ENCODE measurements at regions of chr18 and their contacts with region 1.

Region 1: DNA sequence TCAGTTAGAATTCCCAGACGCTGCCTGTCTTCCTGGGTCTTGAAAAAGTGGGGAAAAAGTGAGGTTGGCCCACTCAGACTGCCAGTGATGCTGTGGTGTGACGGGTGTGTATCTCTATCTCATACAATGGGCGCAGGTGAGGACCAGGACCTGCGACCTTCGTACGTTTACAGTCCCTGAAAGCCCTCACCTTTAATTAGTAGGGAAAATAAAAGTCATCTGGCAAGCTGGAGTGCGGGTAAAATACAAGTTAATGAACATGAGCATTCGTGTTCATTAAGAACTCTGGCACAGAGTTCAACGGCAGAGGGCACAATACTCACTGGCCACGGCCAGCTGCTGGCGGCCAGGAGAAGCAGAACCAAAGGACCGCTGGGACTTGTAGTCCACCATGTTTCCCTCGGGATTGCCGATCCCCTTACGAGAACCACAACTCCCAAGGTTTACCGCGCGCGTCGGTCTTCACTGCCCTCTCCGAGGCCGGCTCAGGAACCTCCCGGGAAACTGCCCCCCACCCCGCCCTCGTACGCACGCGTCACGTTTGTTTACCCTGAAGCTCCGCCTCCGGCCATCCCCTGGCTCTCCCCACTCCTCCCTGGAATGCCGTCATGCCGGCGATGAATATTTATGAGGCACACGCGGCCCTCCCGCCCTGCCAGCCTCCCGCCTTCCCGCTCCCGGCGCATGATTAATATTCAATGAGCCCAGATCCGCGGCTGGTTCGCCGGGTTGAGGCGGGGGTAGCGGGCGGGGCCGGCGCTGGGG is 488 bp upstream of the PHLPP1 start:
- DNase-seq: peak; percentile 100
- ATAC-seq: peak; percentile 99
- H3K4me3 ChIP-seq: peak overlapping the region; percentile 75 to 94
- H3K27ac ChIP-seq: peak overlapping the region; percentile 70 to 71
- H3K4me1 ChIP-seq: no peaks in the 10 kb centered on the region
- H3K27me3 ChIP-seq: no peaks in the 10 kb centered on the region

Region 2: GRCh38 chr18:62437235-62438017 is 277.4 kb before region 1 on chr18:
- intact Hi-C with region 1: loop called in 1 of 2 experiments (anchors 10 kb)
- DNase-seq: peak; percentile 96 to 97
- ATAC-seq: peak; percentile 94
- H3K4me3 ChIP-seq: no peak overlapping the region
- H3K27ac ChIP-seq: peak overlapping the region; percentile 64 to 97
- H3K4me1 ChIP-seq: peaks cover 0 to 3% of the 10 kb centered on the region in 2 donors
- H3K27me3 ChIP-seq: no peaks in the 10 kb centered on the region

Region 3: GRCh38 chr18:62584241-62585120 is 130.4 kb before region 1 on chr18:
- intact Hi-C with region 1: loop called (anchors 5 to 10 kb)
- DNase-seq: peak; percentile 89 to 91
- ATAC-seq: peak; percentile 92
- H3K4me3 ChIP-seq: no peak overlapping the region
- H3K27ac ChIP-seq: no peak overlapping the region
- H3K4me1 ChIP-seq: no peaks in the 10 kb centered on the region
- H3K27me3 ChIP-seq: no peaks in the 10 kb centered on the region

Region 4: GRCh38 chr18:62944454-62944853 is 229.6 kb after region 1 on chr18:
- intact Hi-C with region 1: loop called in 1 of 2 experiments (anchors 5 kb)
- DNase-seq: no peak
- ATAC-seq: no peak
- H3K4me3 ChIP-seq: no peak overlapping the region
- H3K27ac ChIP-seq: no peak overlapping the region
- H3K4me1 ChIP-seq: no peaks in the 10 kb centered on the region
- H3K27me3 ChIP-seq: no peaks in the 10 kb centered on the region

Region 5: DNA sequence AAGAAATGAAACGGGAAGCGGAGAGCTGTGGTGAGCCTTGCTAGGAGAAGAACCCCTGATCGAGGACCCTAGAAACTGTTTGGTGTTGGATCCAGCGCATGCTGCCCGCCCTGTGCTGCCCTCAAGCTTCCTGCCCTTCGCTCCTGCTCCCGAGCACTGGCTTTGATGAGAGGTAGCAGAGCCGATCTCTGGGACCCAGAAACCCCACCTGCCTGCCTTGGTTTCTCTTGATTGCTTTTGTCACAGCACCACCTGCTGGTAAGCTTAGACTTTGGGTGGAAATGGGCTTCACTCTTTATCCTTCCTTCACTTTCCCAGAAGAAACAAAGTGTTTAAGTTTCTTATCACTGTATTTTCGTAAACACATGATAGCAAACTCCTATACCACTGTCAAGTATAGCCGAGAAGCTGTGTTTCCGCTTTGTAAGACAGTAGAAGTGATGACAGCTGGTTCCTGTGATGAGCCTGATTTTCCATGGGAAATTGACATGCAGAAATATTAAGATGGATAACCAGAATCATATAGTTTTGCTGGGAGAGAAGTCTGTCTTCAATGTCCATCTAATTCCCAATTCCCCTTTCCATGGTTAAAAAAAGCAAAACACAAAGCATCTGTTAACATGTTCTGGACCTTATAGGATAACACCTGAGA is 267.9 kb after region 1 on chr18:
- intact Hi-C with region 1: loop called (anchors 2 kb)
- DNase-seq: peak in 1 of 2 donors; percentile 68
- ATAC-seq: peak; percentile 71
- H3K4me3 ChIP-seq: peak overlapping the region in 1 of 2 donors; percentile 34
- H3K27ac ChIP-seq: no peak overlapping the region
- H3K4me1 ChIP-seq: no peaks in the 10 kb centered on the region
- H3K27me3 ChIP-seq: no peaks in the 10 kb centered on the region